ENCODE measurements at regions of chr12 and their contacts with region 1.

Region 1: DNA sequence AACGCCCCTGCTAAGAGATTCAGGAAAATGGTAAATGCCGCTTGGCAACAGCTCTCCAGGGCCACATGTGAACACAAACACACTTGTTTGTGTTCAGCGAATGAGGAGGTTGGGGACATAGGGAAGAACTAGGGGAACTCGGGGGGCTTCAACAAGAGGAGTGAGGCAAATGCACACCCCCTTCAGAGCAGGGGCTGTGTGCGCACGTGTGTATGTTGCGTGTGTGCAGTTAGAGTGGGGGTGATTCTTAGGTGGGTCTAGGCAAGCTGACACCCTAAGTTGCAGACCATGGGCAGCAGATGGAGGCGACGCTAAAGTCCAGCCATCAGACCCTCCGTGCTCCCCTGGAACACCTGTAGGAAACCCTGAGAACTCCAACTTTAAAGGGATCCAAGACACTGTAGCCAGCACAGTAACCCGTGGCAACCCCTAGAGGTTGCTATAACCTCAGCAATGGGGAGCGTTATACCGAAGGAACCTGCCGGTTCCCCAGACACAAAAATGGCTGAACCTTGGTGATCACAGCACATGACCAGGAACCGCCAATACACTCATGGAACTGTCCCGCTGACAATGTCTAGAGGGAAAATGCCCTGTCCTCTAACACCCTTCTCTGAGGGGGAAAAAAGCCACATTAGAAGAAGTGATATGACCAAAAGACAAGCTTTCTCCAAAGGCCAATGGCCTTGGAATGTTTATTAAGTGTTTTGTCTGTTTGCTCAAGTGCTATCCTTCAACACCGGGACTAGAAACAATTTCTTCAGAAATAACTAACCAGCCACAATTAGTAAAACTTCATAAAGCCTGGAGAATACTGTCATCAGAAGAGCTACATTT is 86.5 kb upstream of the CEP83 start:
- DNase-seq: peak; percentile 56
- H3K4me3 ChIP-seq: no peak overlapping the region
- H3K27ac ChIP-seq: no peak overlapping the region
- H3K4me1 ChIP-seq: peaks cover 5% of the 10 kb centered on the region; the same call in 1 of the 2 replicates
- H3K27me3 ChIP-seq: no peaks in the 10 kb centered on the region
- CTCF ChIP-seq: peak; percentile 73

Region 2: DNA sequence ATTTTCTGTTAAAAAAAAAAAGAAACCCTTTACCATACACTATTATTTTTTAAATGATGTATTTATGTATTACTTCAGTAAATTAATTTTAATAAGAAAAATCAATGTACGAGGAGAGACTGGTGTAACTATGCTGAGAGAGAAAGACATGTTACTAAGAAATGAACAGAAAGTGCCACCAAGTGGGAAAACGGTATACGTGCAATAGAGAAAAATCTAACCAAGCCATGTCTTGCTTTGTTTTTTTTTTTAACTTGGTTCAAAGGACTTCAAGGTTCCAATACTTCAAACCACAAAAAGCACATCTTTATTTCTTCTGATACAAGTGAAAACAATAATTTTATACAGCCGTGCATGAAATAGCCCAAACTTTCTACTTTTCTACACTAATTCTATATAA is 434.4 kb after region 1 on chr12:
- CTCF ChIA-PET with region 1: interaction called, 3 read pairs
- POLR2A ChIA-PET with region 1: no interaction called
- intact Hi-C with region 1: loop called (anchors 10 kb)
- DNase-seq: no peak
- H3K4me3 ChIP-seq: no peak overlapping the region
- H3K27ac ChIP-seq: no peak overlapping the region
- H3K4me1 ChIP-seq: no peaks in the 10 kb centered on the region
- H3K27me3 ChIP-seq: no peaks in the 10 kb centered on the region
- CTCF ChIP-seq: no peak

Region 3: DNA sequence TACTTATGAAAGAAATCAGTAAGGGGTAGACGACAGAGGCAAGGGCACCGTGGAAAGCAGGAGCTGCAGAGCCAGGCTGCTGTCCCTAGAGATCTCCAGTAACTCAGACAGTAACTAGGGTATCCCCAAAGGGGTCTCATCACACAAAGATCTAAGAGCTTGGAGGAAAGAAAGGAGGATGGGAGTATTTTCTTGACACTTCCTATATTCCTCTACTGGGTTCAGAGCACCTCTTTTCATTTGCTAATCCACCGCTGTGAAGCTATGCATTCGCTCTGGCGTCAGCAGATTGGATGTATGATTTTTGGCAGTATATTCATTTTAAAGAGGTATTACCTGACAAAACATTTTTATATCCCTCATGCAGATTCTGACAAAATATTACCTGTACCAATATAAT is 992.5 kb after region 1 on chr12:
- CTCF ChIA-PET with region 1: no interaction called
- POLR2A ChIA-PET with region 1: no interaction called
- intact Hi-C with region 1: loop called (anchors 5 kb)
- DNase-seq: no peak
- H3K4me3 ChIP-seq: no peak overlapping the region
- H3K27ac ChIP-seq: no peak overlapping the region
- H3K4me1 ChIP-seq: no peaks in the 10 kb centered on the region
- H3K27me3 ChIP-seq: no peaks in the 10 kb centered on the region
- CTCF ChIP-seq: no peak

Measured in PC-9 (cell line).